ENCODE measurements at regions of chr5 and their contacts with region 1.

Region 1: GRCh38 chr5:66987949-66988838 is 208.4 kb downstream of the CD180 start:
- DNase-seq: no peak
- H3K4me3 Mint-ChIP-seq: no peak overlapping the region
- H3K27ac Mint-ChIP-seq: no peak overlapping the region
- H3K4me1 Mint-ChIP-seq: peaks cover 4% of the 10 kb centered on the region
- H3K27me3 Mint-ChIP-seq: no peaks in the 10 kb centered on the region

Region 2: GRCh38 chr5:66958980-66959641 is 29.1 kb before region 1 on chr5:
- CTCF ChIA-PET with region 1: no interaction called
- POLR2A ChIA-PET with region 1: no interaction called
- intact Hi-C with region 1: no loop called
- DNase-seq: no peak
- H3K4me3 Mint-ChIP-seq: no peak overlapping the region
- H3K27ac Mint-ChIP-seq: no peak overlapping the region
- H3K4me1 Mint-ChIP-seq: no peaks in the 10 kb centered on the region
- H3K27me3 Mint-ChIP-seq: no peaks in the 10 kb centered on the region

Region 3: GRCh38 chr5:67149951-67150523 is 161.8 kb after region 1 on chr5:
- CTCF ChIA-PET with region 1: interaction called, 11 read pairs
- POLR2A ChIA-PET with region 1: no interaction called
- intact Hi-C with region 1: no loop called
- DNase-seq: no peak
- H3K4me3 Mint-ChIP-seq: no peak overlapping the region
- H3K27ac Mint-ChIP-seq: no peak overlapping the region
- H3K4me1 Mint-ChIP-seq: no peaks in the 10 kb centered on the region
- H3K27me3 Mint-ChIP-seq: no peaks in the 10 kb centered on the region

Region 4: GRCh38 chr5:67156976-67157583 is 168.9 kb after region 1 on chr5:
- CTCF ChIA-PET with region 1: interaction called, 21 read pairs
- POLR2A ChIA-PET with region 1: no interaction called
- intact Hi-C with region 1: no loop called
- DNase-seq: peak; percentile 65
- H3K4me3 Mint-ChIP-seq: no peak overlapping the region
- H3K27ac Mint-ChIP-seq: peak overlapping the region; percentile 55
- H3K4me1 Mint-ChIP-seq: peaks cover 42% of the 10 kb centered on the region
- H3K27me3 Mint-ChIP-seq: no peaks in the 10 kb centered on the region

Region 5: GRCh38 chr5:67165526-67166459 is 177.6 kb after region 1 on chr5:
- CTCF ChIA-PET with region 1: interaction called, 8 read pairs
- POLR2A ChIA-PET with region 1: no interaction called
- intact Hi-C with region 1: loop called (anchors 5 kb)
- DNase-seq: peak; percentile 89
- H3K4me3 Mint-ChIP-seq: peak overlapping the region; percentile 91
- H3K27ac Mint-ChIP-seq: peak overlapping the region; percentile 98
- H3K4me1 Mint-ChIP-seq: peaks cover 70% of the 10 kb centered on the region
- H3K27me3 Mint-ChIP-seq: no peaks in the 10 kb centered on the region

Measured in activated CD4-positive, alpha-beta memory T cell treated with anti-CD3 and anti-CD28 coated beads for 36 hours (primary cell).